WTC11 (cell line): ENCODE measurements at regions of chr3 and their contacts with region 1.

Region 1: DNA sequence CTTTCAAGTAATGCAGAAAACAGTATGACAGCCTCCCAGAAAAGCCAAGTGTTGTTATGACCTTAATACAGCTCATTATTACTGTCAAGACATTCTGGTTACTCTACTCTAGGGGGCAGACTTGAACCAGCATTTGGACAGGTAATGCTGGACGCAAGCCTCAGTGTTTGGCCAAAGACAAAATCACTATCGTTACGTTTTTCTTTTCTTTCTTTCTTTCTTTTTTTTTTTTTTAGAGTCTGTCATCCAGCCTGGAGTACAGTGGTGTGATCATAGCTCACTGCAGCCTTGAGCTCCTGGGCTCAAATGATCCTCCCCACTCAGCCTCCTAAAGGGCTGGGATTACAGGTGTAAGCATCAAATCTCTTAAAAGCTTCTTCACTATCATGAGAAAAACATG is 29.4 kb upstream of the TMEM45A start:
- DNase-seq: no peak
- ATAC-seq: peak; percentile 98
- H3K4me3 Mint-ChIP-seq: no peak overlapping the region
- H3K27ac Mint-ChIP-seq: no peak overlapping the region
- H3K4me1 Mint-ChIP-seq: peaks cover 7% of the 10 kb centered on the region
- H3K27me3 Mint-ChIP-seq: peaks cover 7% of the 10 kb centered on the region
- CTCF ChIP-seq: peak; percentile 64

Region 2: GRCh38 chr3:100386437-100387074 is 76.4 kb before region 1 on chr3:
- CTCF ChIA-PET with region 1: no interaction called
- POLR2A ChIA-PET with region 1: no interaction called
- DNase-seq: no peak
- ATAC-seq: no peak
- H3K4me3 Mint-ChIP-seq: no peak overlapping the region
- H3K27ac Mint-ChIP-seq: no peak overlapping the region
- H3K4me1 Mint-ChIP-seq: no peaks in the 10 kb centered on the region
- H3K27me3 Mint-ChIP-seq: no peaks in the 10 kb centered on the region
- CTCF ChIP-seq: no peak

Region 3: DNA sequence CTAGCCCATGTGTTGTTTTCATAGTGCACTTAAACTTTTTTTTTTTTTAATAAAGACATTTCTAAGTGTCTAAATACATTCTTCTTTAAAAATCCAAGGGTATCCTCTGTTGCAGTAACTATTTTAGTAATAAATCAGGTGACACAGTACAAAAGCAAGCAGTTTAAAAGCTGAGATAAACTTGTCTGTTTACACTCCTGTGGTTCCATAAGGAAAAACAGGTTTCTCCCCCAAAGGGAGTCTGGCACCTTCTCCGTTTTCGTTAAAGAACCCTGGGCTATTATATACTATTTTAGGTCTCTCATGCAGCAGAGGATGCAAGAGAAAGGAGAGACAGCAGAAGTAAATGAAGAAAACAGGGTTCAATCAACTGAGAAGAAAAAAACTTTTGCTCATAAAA is 13.8 kb before region 1 on chr3:
- CTCF ChIA-PET with region 1: interaction called, 17 read pairs
- POLR2A ChIA-PET with region 1: no interaction called
- DNase-seq: no peak
- ATAC-seq: no peak
- H3K4me3 Mint-ChIP-seq: no peak overlapping the region
- H3K27ac Mint-ChIP-seq: peak overlapping the region; percentile 43
- H3K4me1 Mint-ChIP-seq: peaks cover 23% of the 10 kb centered on the region
- H3K27me3 Mint-ChIP-seq: no peaks in the 10 kb centered on the region
- CTCF ChIP-seq: no peak

Region 4: GRCh38 chr3:100561459-100562158 is 98.6 kb after region 1 on chr3:
- CTCF ChIA-PET with region 1: interaction called, 19 read pairs
- POLR2A ChIA-PET with region 1: no interaction called
- DNase-seq: peak; percentile 20
- ATAC-seq: peak; percentile 97
- H3K4me3 Mint-ChIP-seq: no peak overlapping the region; the same call in 1 of the 2 replicates
- H3K27ac Mint-ChIP-seq: peak overlapping the region; percentile 84
- H3K4me1 Mint-ChIP-seq: peaks cover 23% of the 10 kb centered on the region
- H3K27me3 Mint-ChIP-seq: no peaks in the 10 kb centered on the region
- CTCF ChIP-seq: no peak

Region 5: GRCh38 chr3:100590114-100590839 is 127.3 kb after region 1 on chr3:
- CTCF ChIA-PET with region 1: interaction called, 115 read pairs
- POLR2A ChIA-PET with region 1: interaction called, 3 read pairs
- DNase-seq: peak; percentile 49
- ATAC-seq: peak; percentile 88
- H3K4me3 Mint-ChIP-seq: peak overlapping the region; percentile 54
- H3K27ac Mint-ChIP-seq: no peak overlapping the region
- H3K4me1 Mint-ChIP-seq: peaks cover 6% of the 10 kb centered on the region
- H3K27me3 Mint-ChIP-seq: no peaks in the 10 kb centered on the region
- CTCF ChIP-seq: peak; percentile 87

Region 6: DNA sequence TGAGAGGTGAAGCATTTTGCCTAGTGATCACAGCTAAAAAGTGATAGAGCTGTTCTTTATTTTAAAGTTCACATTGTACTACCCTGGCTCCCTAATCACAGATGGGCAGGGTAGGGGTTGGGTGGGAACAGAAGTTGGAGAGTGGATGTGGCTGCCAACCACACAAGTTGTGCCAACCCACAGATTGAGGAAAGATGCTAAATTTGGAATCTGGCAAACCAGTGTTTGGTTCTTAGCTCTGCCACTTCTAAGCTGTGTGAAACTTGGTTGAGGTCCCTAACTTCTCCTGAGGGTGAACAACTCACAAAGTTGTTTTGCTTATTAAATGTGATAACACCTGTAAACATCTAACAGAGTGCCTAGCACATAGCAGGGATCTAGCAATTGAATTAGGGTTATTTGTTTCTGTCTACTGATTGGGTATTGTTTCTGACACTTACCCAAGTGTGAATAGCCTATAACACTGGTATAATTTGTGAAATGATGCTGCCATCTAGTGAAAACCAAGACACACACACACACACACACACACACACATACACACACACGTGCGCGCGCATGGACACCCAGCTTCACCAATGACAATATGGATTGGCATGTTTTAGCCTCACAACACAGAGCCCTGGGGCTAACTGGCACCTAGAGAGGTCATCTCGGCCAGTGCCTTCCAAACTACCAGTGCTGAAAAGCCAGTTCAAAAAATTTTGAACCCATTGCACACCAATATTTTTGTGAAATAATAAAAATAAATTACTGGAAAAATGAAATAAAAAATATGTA is 171.7 kb after region 1 on chr3:
- CTCF ChIA-PET with region 1: interaction called, 18 read pairs
- POLR2A ChIA-PET with region 1: no interaction called
- DNase-seq: no peak
- ATAC-seq: no peak
- H3K4me3 Mint-ChIP-seq: no peak overlapping the region
- H3K27ac Mint-ChIP-seq: no peak overlapping the region
- H3K4me1 Mint-ChIP-seq: peaks cover 13% of the 10 kb centered on the region
- H3K27me3 Mint-ChIP-seq: no peaks in the 10 kb centered on the region
- CTCF ChIP-seq: no peak

Region 7: DNA sequence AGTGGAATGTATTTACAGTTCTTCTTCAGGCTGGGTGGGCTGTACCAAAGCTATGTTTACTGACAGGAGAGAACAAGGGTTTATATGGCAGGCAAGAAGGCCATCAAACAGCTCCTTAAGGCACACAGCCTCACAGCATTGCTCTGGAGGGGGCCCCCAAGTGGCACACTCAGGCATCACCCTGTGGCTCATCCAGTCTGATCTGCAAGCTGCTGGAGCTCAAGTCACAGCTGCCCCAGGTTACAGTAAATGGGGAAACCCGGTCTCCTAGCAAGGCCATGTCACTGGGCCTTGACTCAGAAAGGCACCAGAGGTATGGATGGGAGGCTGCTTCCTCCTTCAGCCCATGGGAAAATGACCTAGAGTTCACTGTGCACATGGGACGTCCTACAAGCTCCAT is 313.7 kb after region 1 on chr3:
- CTCF ChIA-PET with region 1: interaction called, 12 read pairs
- POLR2A ChIA-PET with region 1: no interaction called
- DNase-seq: peak; percentile 54
- ATAC-seq: peak; percentile 93
- H3K4me3 Mint-ChIP-seq: no peak overlapping the region
- H3K27ac Mint-ChIP-seq: no peak overlapping the region
- H3K4me1 Mint-ChIP-seq: peaks cover 4% of the 10 kb centered on the region; the same call in 1 of the 2 replicates
- H3K27me3 Mint-ChIP-seq: no peaks in the 10 kb centered on the region
- CTCF ChIP-seq: no peak